Transverse colon (tissue), 4 donors: ENCODE measurements at regions of chr5 and their contacts with region 1.

Region 1: GRCh38 chr5:54249210-54250028 is 61.0 kb downstream of the ARL15 start:
- DNase-seq: peak; percentile 14
- H3K4me3 ChIP-seq: no peak overlapping the region
- H3K27ac ChIP-seq: no peak overlapping the region
- H3K4me1 ChIP-seq: peaks cover 0 to 35% (median 3%) of the 10 kb centered on the region in 4 donors
- H3K27me3 ChIP-seq: no peaks in the 10 kb centered on the region
- CTCF ChIP-seq: peak in 2 of 5 experiments; percentile 16 to 21
- EP300 ChIP-seq: no peak
- POLR2A ChIP-seq: no peak

Region 2: DNA sequence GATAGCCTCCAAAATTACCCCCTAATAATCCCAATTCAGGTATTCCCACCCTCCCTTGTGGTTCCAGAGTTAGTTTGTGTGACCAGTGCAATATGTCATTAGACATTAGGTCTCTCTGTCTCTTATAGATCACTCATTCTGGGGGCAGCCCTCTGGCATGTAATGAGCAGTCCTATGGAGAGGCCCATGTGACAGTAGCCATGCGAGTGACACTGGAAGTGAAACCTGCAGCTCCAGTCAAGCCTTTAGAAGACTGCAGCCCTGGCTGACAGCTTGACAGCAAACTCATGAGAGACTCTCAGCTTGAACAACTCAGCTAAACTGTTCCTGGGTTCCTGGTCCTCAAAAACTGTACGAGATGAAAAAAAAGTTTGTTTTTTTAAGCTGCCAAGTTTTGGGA is 152.1 kb after region 1 on chr5:
- in situ Hi-C with region 1: loop called in 1 of 4 experiments (anchors 25 kb)
- intact Hi-C with region 1: no loop called
- DNase-seq: no peak
- H3K4me3 ChIP-seq: no peak overlapping the region
- H3K27ac ChIP-seq: no peak overlapping the region
- H3K4me1 ChIP-seq: no peaks in the 10 kb centered on the region
- H3K27me3 ChIP-seq: no peaks in the 10 kb centered on the region
- CTCF ChIP-seq: no peak
- EP300 ChIP-seq: no peak
- POLR2A ChIP-seq: no peak

Region 3: GRCh38 chr5:54469622-54470021 is 220.2 kb after region 1 on chr5:
- in situ Hi-C with region 1: no loop called
- intact Hi-C with region 1: loop called (anchors 10 kb)
- DNase-seq: no peak
- H3K4me3 ChIP-seq: peak overlapping the region in 1 of 4 donors; percentile 22
- H3K27ac ChIP-seq: peak overlapping the region in 1 of 4 donors; percentile 8
- H3K4me1 ChIP-seq: no peaks in the 10 kb centered on the region
- H3K27me3 ChIP-seq: no peaks in the 10 kb centered on the region
- CTCF ChIP-seq: no peak
- EP300 ChIP-seq: no peak
- POLR2A ChIP-seq: no peak

Region 4: DNA sequence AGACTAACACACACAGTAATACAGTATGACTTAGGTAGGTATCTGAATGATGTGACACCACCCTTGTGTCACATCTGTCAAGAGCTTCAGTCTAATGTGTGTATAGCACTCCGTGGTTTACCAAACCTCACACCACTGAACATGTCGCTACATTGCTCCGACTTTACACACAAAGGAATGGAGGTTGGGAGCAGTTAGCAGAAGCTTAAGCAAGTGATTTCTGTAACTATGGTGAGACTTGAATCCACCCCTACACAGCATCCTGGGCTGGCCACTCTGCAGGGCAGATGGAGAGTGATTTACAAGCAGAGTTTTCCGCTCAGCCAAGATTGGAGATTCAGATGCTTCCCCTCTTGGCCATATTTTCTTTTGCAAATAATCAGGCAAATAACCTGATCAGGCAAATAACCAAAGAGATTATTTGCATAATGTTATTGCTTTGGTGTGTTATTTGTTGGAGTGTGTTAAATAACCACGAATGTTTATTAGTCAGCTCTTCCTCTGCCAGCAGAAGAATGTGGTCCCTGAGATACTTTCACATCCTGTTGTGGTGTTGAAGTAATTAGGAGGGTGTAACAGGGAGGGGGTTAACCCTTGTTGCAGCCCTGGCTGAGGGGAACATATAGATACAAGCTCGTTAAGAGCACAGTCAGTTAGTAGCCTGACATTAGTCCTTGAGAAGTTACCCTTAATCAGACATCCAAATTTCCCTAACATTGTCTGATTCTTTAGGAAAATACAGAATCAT is 361.0 kb after region 1 on chr5:
- in situ Hi-C with region 1: no loop called
- intact Hi-C with region 1: no loop called
- DNase-seq: peak; percentile 13
- H3K4me3 ChIP-seq: no peak overlapping the region
- H3K27ac ChIP-seq: no peak overlapping the region
- H3K4me1 ChIP-seq: peaks cover 0 to 11% (median 2%) of the 10 kb centered on the region in 4 donors
- H3K27me3 ChIP-seq: no peaks in the 10 kb centered on the region
- CTCF ChIP-seq: no peak
- EP300 ChIP-seq: no peak
- POLR2A ChIP-seq: no peak